ENCODE measurements at regions of chr9 and their contacts with region 1.

Region 1: DNA sequence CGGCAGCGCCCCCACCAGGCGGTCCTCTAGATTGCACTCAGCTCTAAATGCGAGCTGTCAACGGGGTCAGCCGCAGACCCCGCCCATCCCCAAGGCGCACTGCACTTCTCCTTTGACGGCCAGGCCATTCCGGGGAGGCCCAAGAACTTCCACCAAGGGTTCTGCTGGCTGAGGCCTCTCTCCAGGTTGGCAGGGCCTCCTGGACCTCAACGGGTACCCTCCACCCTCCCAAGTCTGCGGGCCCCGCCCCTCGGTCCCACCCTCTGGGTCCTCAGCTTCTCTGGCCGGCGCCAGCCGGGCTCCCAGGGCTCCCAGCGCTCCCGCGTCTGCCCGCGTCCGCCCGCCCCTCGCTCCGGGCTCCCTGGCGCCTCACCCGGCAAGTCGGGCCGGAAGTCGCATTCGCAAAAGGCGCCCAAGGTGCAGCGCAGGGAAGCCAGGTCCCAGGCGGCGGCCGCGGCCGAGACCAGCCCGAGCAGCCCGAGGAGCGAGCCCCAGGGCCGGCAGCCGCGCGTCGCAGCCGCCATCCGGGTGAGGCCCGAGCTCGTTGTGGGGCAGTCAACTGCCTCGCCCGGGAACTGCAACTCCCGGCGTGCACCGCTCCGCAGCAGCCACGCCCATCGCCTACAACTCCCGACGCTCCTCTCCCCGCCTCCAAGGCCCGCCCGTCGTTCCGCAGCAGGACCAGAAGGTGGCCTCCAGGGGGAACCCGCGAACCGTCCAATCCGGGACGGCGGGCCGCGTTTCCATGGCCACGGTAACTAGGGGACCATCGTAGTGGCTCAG is at the start of gene TOR2A:
- DNase-seq: peak; percentile 99
- H3K4me3 ChIP-seq: peak within 1 kb of the TSS; percentile 94
- H3K4me3 Mint-ChIP-seq: peak within 1 kb of the TSS; percentile 80 to 98 (median 94)
- H3K27ac ChIP-seq: peak within 1 kb of the TSS; percentile 62
- H3K27ac Mint-ChIP-seq: peak within 1 kb of the TSS; percentile 85 to 98 (median 96)
- H3K4me1 ChIP-seq: peaks cover 22% of the 10 kb centered on the region
- H3K4me1 Mint-ChIP-seq: peaks cover 14 to 25% (median 23%) of the 10 kb centered on the region in 3 donors
- H3K27me3 ChIP-seq: no peaks in the 10 kb centered on the region
- H3K27me3 Mint-ChIP-seq: no peaks in the 10 kb centered on the region
- total RNA-seq, gene TOR2A: 30.7 to 33.7 TPM

Region 2: GRCh38 chr9:127503947-127504782 is 230.8 kb before region 1 on chr9:
- CTCF ChIA-PET with region 1: interaction called, 19 read pairs
- POLR2A ChIA-PET with region 1: no interaction called
- DNase-seq: peak; percentile 63 to 84 (median 69)
- H3K4me3 ChIP-seq: no peak overlapping the region
- H3K4me3 Mint-ChIP-seq: no peak overlapping the region
- H3K27ac ChIP-seq: no peak overlapping the region
- H3K27ac Mint-ChIP-seq: peak overlapping the region in 2 of 8 donors; percentile 23 to 61
- H3K4me1 ChIP-seq: no peaks in the 10 kb centered on the region
- H3K4me1 Mint-ChIP-seq: no peaks in the 10 kb centered on the region
- H3K27me3 ChIP-seq: no peaks in the 10 kb centered on the region
- H3K27me3 Mint-ChIP-seq: no peaks in the 10 kb centered on the region

Region 3: DNA sequence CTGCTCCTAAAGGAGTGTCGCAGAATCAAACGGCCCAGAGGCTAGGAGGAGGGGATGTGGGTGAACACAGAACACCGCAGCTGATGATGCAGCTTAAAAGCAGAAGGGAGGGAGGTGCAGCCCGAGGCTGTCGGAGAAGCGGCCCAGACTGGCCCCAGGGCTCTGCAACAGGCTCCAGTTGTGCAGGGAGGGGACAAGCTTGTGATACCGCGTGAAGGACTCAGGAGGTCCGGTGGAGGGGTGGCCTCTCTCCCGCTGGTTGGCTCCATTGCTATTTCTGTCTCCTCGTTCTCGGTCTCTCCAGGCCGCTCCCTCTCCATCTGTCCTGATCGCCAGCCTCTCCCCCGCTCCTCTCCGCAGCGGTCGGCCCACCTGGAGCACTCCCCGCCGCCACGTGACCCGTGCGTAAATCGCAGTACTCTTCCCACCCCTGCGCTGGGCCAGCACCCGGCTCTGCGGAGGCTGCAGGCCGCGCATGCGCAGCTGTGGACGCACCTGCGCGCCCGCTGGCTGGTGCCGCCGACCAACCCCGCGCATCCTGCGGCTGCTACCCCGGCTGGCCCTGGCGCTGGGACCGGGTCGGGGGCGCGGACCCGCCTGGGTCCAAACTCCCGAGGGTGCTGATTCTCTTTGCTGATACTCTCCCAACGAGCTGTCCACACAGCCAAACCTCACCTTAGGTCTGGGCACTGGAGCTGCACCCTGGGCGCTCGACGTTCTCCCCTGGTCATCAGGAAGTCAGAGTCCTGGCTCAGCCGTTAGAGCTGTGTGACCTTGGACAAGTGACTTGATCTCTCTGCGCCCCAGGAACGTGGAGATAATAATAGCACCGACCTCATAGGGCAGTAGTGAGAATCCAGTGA is 126.6 kb before region 1 on chr9:
- CTCF ChIA-PET with region 1: interaction called, 17 read pairs
- POLR2A ChIA-PET with region 1: interaction called, 4 read pairs
- DNase-seq: peak; percentile 63 to 83 (median 78)
- H3K4me3 ChIP-seq: peak overlapping the region; percentile 57
- H3K4me3 Mint-ChIP-seq: peak overlapping the region; percentile 84 to 95 (median 87)
- H3K27ac ChIP-seq: no peak overlapping the region
- H3K27ac Mint-ChIP-seq: peak overlapping the region; percentile 31 to 93 (median 71)
- H3K4me1 ChIP-seq: peaks cover 14% of the 10 kb centered on the region
- H3K4me1 Mint-ChIP-seq: peaks cover 22 to 30% (median 28%) of the 10 kb centered on the region in 3 donors
- H3K27me3 ChIP-seq: peaks cover 7% of the 10 kb centered on the region
- H3K27me3 Mint-ChIP-seq: peaks cover 8 to 24% of the 10 kb centered on the region in 2 donors

Region 4: DNA sequence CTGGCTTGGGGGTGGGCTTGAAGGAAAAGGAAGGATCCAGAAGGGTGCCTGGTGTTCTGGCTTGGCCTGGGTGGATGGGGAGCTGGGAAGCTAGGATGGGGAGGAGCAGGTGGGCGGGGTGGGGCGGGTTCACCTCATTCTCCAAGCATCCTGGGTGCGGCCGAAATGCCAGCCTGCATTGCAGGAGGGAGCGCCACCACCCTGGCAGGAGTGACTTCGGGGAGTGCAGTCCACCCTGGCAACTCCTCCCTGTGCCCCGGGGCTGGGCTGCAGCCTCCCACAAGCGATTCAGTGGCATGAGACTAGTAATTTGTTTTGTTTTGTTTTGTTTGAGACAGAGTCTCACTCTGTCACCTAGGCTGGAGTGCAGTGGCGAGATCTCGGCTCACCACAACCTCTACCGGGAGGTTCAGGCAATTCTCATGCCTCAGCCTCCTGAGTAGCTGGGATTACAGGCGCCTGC is 13.5 kb before region 1 on chr9:
- CTCF ChIA-PET with region 1: interaction called, 37 read pairs
- POLR2A ChIA-PET with region 1: interaction called, 6 read pairs
- DNase-seq: peak in 1 of 5 donors; percentile 32
- H3K4me3 ChIP-seq: no peak overlapping the region
- H3K4me3 Mint-ChIP-seq: peak overlapping the region; percentile 56 to 90 (median 79)
- H3K27ac ChIP-seq: no peak overlapping the region
- H3K27ac Mint-ChIP-seq: peak overlapping the region; percentile 70 to 95 (median 84)
- H3K4me1 ChIP-seq: peaks cover 31% of the 10 kb centered on the region
- H3K4me1 Mint-ChIP-seq: peaks cover 26 to 38% (median 27%) of the 10 kb centered on the region in 3 donors
- H3K27me3 ChIP-seq: no peaks in the 10 kb centered on the region
- H3K27me3 Mint-ChIP-seq: no peaks in the 10 kb centered on the region

Region 5: DNA sequence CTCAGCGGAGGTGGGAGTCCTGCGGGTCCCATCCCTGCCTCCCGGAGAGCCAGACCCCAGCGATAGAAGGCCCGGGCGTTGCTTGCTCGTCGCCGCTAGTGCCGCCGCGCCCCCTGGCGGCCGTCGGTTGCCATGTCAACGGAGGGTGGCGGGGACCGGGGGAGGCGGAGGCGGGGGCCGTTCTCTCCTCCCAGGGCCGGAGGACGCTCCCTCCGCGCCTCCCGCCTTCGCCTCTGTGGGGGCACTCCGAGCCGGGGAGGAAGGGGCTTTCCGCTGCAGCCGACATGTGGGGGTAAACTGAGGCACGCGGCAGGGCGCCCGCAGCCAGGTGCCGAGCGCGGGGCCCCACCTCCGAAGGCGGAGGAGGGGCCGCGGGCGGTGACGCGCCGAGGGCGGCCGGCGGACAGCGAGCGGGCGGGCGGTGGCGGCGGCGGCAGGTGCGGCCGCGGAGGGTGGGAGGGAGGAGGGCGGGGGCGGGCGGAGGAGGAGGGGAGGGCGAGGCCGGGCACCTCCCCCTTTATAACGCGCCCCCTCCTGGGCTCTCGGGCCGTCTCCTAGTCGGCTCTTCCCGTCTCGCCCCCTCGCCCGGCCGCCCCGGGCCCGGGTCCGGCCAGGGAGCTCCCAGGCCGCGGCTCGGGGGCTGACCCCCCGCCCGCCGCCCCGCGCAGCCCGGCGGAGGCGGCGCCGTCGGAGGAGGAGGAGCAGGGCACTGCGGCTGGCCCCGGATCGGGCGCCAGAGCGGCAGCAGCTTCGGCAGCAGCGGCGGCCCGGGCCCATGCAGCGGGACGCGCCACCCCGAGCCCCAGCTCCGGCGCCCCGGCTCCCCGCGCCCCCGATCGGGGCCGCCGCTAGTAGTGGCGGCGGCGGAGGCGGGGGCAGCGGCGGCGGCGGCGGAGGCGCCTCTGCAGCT is 50.3 kb after region 1 on chr9:
- CTCF ChIA-PET with region 1: interaction called, 34 read pairs
- POLR2A ChIA-PET with region 1: interaction called, 16 read pairs
- DNase-seq: peak; percentile 85 to 94 (median 89)
- H3K4me3 ChIP-seq: peak overlapping the region; percentile 52
- H3K4me3 Mint-ChIP-seq: peak overlapping the region; percentile 85 to 97 (median 90)
- H3K27ac ChIP-seq: peak overlapping the region; percentile 64
- H3K27ac Mint-ChIP-seq: peak overlapping the region; percentile 95 to 99 (median 98)
- H3K4me1 ChIP-seq: peaks cover 59% of the 10 kb centered on the region
- H3K4me1 Mint-ChIP-seq: peaks cover 59 to 76% (median 76%) of the 10 kb centered on the region in 3 donors
- H3K27me3 ChIP-seq: no peaks in the 10 kb centered on the region
- H3K27me3 Mint-ChIP-seq: peaks cover 0 to 4% of the 10 kb centered on the region in 2 donors

Region 6: DNA sequence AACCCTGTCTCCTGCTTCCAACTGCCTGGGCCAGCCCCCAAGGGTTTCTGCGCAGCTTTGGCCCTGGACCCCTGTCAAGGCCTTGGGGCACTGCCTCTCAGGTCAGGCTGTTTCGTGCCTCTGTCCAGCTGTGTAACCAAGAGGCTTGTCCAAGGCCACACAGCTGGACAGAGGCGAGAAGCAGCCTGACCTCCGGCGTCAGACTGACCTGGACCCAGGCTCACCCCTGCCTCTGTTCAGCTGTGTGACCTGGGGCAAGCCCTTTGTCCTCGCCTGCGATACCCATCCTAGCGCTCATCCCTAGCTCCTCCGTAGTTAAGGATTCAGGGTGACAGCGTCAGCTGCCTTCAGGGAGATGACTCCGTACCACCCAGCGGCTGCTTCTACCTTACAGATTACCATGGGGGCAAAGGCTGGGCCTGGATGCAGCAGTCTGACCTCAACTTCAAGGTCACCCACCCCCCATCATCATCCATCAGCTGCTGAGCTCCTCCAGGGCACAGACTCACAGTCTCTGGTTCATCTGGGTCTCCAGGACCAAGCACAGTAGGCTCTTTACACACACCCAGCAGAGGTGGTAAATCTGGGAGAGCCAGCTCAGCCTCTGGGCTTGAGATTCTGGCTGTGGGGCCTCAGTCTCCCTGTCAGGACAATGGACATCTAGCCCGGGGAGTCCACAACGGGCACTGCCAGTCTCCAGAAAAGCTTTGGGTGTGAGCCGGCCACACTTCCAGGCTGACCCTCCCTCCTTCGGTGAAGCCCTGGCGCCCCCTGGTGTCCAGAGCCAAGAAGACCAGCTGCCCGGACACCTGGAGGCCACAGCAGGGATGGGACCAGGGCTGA is 134.6 kb after region 1 on chr9:
- CTCF ChIA-PET with region 1: interaction called, 49 read pairs
- POLR2A ChIA-PET with region 1: interaction called, 5 read pairs
- DNase-seq: peak; percentile 58 to 85 (median 71)
- H3K4me3 ChIP-seq: no peak overlapping the region
- H3K4me3 Mint-ChIP-seq: peak overlapping the region in 1 of 7 donors; percentile 9
- H3K27ac ChIP-seq: no peak overlapping the region
- H3K27ac Mint-ChIP-seq: peak overlapping the region in 4 of 8 donors; percentile 42 to 88 (median 61)
- H3K4me1 ChIP-seq: peaks cover 16% of the 10 kb centered on the region
- H3K4me1 Mint-ChIP-seq: peaks cover 16 to 18% (median 18%) of the 10 kb centered on the region in 3 donors
- H3K27me3 ChIP-seq: no peaks in the 10 kb centered on the region
- H3K27me3 Mint-ChIP-seq: no peaks in the 10 kb centered on the region